ENCODE measurements at regions of chr5 and their contacts with region 1.

Region 1: DNA sequence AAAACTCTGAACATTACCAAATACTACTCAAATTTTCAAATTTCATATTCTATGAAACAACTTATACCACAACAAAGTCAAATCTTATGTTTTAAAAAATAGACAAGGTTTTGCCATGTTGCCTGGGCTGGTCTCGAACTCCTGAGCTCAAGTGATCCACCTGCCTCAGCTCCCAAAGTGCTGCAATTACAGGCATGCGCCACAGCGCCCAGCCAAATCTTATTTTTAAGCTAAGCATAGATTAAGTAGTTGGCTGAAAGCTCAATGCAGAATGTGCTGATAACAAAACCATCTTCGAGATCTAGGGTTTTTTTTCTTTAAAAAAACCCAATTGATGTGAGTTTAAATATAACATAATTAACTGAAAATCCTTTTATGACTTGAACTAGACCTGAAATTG is 6.4 kb downstream of the LMBRD2 start:
- DNase-seq: no peak
- ATAC-seq: no peak

Region 2: DNA sequence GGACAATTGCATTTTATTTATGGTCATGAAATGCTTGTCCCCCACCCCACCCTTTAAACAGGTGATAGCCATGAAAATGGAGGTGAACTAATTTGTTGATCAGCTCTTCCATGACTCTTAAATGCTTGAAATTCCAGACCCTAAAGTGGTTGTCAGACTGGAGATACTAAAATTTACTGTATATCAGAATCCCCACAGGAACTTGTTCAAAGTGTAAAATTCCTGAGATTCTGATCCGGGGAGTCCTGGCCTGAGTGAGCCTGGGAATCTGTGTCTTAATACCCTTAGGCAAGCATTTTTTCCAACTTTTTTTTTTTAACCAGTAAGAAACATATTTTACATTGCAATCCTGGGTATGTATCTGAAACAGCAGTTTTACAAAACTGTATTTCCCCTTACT is 11.3 kb after region 1 on chr5:
- intact Hi-C with region 1: loop called (anchors 1 kb)
- DNase-seq: no peak
- ATAC-seq: no peak

Region 3: DNA sequence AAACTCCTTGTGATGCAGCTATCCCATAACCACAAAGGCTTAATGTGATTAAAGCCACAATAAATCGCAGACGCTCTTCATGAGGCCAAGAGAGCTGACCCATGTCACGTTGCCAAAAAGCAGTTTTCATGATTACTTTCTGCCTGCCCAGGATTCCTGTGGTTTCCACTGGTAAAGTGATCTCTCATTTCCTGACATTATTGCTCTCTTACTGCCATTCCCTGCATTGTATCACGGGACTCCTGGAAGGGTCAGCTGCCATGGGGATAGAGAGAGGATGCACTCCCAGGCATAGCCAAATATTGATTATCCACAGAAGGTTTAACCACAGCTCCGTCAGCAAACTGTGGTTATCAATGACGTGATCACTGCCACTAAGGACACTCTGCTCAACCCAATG is 357.3 kb after region 1 on chr5:
- intact Hi-C with region 1: no loop called
- DNase-seq: no peak
- ATAC-seq: peak; percentile 74

Measured in sciatic nerve (tissue), 2 donors.